ENCODE measurements at regions of chr2 and their contacts with region 1.

Region 1: DNA sequence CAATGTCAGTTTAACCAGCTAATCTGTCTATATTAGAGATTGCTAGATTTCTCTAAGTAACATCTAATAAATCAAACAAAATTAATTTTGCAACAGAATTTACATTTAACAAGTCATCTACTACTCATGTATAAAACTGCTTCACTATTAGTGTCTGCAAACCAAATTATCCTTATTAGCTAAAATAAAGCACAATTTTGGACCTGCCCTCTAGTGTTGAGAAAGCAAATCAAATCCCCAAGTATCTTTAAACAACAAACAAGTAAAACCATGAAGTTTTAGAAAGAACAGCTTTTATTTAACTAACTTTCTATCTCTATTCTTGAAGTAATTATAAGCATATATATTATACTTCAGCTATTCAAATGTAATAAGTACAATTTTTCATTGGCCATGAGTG is 113.1 kb upstream of the SP3 start:
- DNase-seq: no peak
- H3K4me3 ChIP-seq: no peak overlapping the region
- H3K27ac ChIP-seq: no peak overlapping the region
- H3K27me3 ChIP-seq: no peaks in the 10 kb centered on the region
- CTCF ChIP-seq: peak; percentile 59

Region 2: DNA sequence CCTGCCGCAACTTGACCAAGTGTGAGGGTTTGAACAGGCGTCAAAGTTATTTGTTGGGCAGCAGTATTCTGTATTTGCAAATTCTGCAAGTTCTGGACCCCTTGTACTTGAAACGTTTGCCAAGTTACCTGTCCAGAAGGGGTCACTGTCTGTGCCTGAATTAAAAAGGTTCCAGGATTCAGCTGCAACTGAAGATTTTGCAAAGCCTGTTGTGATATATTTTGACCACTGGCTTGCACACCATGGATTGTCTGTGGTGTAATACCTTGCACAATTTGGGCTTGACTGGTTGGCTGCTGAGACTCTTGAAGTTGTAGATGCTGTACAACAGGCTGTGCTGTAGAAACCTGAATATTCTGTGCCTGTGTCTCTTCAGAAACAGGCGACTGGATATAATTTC is 123.3 kb before region 1 on chr2:
- CTCF ChIA-PET with region 1: no interaction called
- POLR2A ChIA-PET with region 1: no interaction called
- DNase-seq: no peak
- H3K4me3 ChIP-seq: no peak overlapping the region
- H3K27ac ChIP-seq: no peak overlapping the region
- H3K27me3 ChIP-seq: no peaks in the 10 kb centered on the region
- CTCF ChIP-seq: no peak

Region 3: DNA sequence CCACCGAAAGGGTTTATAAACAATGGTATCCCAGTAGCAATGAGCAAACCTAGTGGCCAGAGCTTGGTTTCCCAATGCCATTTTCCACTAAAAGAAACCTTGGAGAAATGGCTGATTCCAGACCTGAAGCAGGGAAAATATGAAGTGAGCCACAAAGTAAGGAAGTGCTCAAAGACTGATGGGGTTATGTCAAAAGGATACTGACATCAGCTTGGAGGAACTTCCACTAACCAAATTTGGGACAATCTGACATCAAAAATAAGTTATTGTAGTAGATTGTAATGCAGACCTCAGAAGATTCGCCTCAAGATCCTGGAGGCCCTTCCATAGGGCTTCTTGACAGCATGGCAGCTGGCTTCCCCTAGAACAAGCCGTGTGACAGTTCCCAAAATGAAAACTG is 33.7 kb before region 1 on chr2:
- CTCF ChIA-PET with region 1: interaction called, 11 read pairs
- POLR2A ChIA-PET with region 1: no interaction called
- DNase-seq: no peak
- H3K4me3 ChIP-seq: no peak overlapping the region
- H3K27ac ChIP-seq: no peak overlapping the region
- H3K27me3 ChIP-seq: no peaks in the 10 kb centered on the region
- CTCF ChIP-seq: peak; percentile 9; the same call in 1 of the 2 replicates

Region 4: DNA sequence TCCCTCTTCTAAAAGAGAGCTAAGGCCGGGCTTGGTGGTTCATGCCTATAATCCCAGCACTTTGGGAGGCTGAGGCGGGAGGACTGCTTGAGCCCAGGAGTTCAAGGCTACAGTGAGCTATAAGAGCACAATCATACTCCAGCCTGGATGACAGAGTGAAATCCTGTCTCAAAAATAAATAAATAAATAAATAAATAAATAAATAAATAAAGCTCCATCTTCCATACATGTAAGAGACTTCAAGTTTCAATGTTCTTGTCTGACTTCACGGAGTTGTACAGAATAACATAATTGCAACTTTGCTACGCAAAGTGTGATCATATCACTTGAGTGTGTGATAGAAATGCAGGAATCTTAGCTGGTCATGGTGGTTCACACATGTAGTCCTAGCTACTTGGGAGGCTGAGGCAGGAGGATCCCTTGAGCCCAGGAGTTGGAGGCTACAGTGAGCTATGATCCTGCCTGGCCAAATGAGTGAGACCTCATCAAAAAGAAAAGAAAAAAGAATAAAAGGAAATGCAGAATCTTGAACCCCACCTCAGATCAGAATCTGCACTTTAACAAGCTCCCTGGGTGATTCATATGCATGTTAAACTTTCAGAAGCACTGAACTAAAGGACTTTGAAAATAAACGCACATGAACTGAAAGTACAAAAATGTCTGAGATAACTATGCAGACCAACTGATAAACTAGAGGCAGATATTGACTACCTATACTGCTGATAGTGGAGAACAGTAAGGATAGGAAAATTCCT is 10.6 kb after region 1 on chr2:
- CTCF ChIA-PET with region 1: interaction called, 10 read pairs
- POLR2A ChIA-PET with region 1: no interaction called
- DNase-seq: no peak
- H3K4me3 ChIP-seq: no peak overlapping the region
- H3K27ac ChIP-seq: no peak overlapping the region
- H3K27me3 ChIP-seq: no peaks in the 10 kb centered on the region
- CTCF ChIP-seq: no peak

Measured in AG04450 (cell line).